Spleen (tissue), 13 donors: ENCODE measurements at regions of chr20 and their contacts with region 1.

Region 1: DNA sequence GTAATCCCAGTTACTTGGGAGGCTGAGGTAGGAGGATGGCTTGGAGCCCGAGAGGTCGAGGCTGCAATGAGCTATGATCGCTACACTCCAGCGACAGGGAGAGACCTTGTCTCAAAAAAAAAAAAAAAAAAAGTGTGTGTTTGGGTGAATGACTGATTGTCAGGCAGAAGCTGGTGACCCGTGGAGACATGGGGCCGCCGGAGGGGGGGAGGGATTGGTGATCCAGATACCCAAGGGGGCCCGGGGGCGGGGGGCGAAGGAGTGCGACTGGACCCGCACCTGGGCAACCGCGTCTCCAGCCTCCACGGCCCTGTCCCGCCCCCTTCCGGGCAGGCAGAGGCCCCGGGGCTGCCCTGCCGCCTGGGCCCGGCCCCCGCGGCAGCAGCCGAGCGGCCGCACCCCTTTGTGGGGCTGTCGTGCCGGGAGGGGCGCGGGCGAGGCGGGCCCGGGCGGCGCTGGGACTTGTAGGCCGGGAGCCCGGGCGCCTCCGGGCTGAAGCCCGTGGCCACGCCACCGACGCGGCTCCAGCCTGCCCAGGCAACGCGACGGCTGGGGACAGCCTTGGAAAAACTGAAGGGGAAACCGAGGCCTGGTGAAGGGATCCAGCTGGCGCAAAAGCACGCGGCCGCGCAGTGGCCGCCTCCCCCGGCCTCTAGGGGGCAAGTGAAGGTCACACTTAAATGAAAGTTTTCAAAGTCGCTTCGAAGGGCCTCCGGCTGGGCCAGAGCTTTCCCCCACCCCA is 2.1 kb upstream of the RBM38 start:
- DNase-seq: peak; percentile 95
- H3K4me3 ChIP-seq: peak overlapping the region; percentile 6 to 94 (median 39)
- H3K27ac ChIP-seq: peak overlapping the region; percentile 67 to 98 (median 84)
- H3K4me1 ChIP-seq: peaks cover 27 to 81% (median 57%) of the 10 kb centered on the region in 6 donors
- H3K27me3 ChIP-seq: no peaks in the 10 kb centered on the region
- CTCF ChIP-seq: peak; percentile 3 to 71 (median 54)
- POLR2A ChIP-seq: no peak

Region 2: DNA sequence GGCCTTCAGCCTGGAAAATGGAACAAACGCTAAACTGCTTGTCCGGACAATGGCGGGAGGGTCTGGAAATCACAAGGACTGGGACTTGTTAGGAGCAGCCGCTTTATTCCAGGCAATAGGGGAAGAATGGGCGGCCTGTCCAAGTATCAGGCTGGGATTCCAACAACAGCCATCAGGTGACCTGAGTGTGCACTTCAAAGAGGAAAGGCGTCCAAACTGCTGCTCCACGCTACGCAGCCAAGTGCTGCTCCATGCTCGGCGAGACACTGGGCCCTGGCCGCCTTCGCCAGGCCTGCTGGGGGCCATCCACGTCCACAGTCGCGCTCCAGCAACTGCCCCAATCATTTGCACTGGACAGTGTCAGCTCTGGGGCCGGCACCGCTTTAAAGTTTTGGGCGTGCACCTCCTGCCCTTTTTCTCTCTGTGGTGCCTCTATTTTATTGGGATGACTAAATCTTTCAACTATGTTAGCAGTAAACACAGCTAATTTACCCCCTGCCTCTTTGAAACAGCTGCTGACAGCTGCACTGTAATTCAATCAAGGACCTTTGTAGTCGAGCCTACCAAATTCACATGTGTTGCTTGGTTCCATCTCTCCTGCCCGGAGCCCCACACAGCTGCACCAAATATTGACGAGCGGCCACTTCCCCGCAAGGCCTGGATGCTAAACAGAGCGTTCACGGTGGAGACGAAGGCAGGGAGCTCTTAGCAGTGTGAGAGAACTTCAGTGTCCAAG is 221.0 kb before region 1 on chr20:
- intact Hi-C with region 1: no loop called
- DNase-seq: peak; percentile 22
- H3K4me3 ChIP-seq: no peak overlapping the region
- H3K27ac ChIP-seq: no peak overlapping the region
- H3K4me1 ChIP-seq: no peaks in the 10 kb centered on the region
- H3K27me3 ChIP-seq: peaks cover 0 to 12% (median 0%) of the 10 kb centered on the region in 7 donors
- CTCF ChIP-seq: no peak
- POLR2A ChIP-seq: no peak

Region 3: DNA sequence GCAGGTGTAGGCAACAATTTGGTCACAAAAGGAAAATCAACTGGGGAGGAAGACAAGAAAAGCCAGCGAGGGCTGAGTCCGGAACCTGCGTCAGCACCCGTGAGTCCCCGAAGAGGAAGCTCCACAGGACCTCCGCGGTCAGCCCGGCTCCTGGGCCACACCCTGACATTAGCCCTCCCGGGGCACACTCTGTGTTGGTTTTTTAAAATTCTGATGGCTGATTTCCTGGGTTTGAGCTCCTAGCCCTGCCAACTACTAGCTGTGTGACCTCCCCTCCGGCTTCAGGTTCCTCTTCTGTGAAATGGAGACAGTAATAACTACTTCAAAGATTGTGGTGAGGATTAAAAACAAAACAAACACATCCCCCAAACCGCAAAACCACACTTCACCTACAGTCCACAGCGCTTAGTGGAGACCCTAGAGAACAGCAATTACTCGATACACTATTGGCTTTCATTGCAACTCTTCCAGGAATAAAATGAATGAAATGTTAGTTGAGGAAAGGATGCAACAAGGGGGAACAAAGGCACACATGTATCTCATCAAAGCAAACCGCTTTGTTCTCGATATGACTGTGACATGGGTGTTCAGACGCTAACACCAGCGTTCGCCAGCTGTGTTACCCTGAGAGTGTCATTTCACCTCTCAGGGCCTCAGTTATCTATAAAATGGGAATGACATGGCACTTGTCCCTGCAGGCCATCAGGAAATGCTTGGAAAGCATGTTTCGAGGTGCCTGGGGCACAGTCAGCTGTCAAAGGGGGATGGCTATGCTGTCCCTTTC is 230.1 kb after region 1 on chr20:
- intact Hi-C with region 1: loop called (anchors 5 kb)
- DNase-seq: peak; percentile 96
- H3K4me3 ChIP-seq: peak overlapping the region in 7 of 8 donors; percentile 36 to 72 (median 43)
- H3K27ac ChIP-seq: peak overlapping the region; percentile 80 to 96 (median 89)
- H3K4me1 ChIP-seq: peaks cover 18 to 79% (median 55%) of the 10 kb centered on the region in 6 donors
- H3K27me3 ChIP-seq: no peaks in the 10 kb centered on the region
- CTCF ChIP-seq: no peak
- POLR2A ChIP-seq: no peak